Naive thymus-derived CD4-positive, alpha-beta T cell (primary cell): ENCODE measurements at regions of chrX and their contacts with region 1.

Region 1: DNA sequence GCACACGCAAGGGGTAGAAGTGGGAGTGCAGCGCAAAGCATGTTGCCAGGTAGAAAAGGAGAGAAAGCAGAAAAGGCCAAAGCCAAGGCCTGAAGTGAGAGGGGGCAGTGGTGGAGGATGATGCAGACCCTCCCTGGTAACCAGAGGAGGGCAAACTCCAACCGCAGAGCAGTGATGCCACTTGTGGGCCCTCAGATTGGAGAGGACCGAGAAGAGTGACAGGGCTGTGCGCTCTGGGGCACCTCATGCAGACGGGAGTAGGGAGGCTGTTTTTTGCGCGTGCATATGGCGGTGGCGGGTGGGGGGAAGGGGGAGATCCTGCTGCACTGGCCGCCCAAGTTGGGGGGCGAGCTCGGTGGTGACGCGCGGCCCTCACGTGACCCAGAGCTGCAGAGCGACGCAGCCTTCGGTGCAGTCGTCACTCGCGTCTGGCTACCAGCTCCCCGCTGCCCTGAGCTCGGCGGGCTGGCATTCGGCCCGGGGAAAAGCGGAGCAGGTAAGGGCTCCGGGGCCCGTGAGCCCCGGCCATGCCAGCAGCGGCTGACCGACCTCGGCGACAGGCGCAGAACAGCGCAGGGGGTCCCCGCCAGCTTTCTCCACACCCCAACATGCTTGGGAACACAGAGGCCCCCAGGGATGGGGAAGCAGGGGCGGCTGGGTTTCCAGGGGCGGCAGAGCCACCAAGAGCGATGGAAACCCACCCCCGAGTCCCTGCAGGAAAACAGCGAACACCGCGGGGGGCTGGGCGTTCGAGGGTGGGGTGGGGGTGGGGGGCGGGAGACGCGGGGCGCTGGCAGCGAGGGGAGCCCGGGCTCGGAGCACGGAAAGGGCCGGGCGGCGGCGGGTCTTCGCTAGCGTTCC is at the start of gene BEX3:
- DNase-seq: peak in 8 of 9 donors; percentile 21 to 61 (median 50)
- ATAC-seq: peak; percentile 73
- H3K4me3 ChIP-seq: peak within 1 kb of the TSS; percentile 27
- H3K4me3 Mint-ChIP-seq: peak within 1 kb of the TSS; percentile 74 to 91 (median 84)
- H3K27ac ChIP-seq: peak within 1 kb of the TSS; percentile 73
- H3K27ac Mint-ChIP-seq: peak within 1 kb of the TSS in 8 of 9 donors; percentile 64 to 89 (median 76)
- H3K4me1 ChIP-seq: no peaks in the 10 kb centered on the region
- H3K4me1 Mint-ChIP-seq: peaks cover 3 to 14% (median 7%) of the 10 kb centered on the region in 7 donors
- H3K27me3 ChIP-seq: no peaks in the 10 kb centered on the region
- H3K27me3 Mint-ChIP-seq: peaks cover 0 to 4% (median 0%) of the 10 kb centered on the region in 5 donors
- total RNA-seq, gene BEX3: 5.9 to 75.5 (median 28.0) TPM

Region 2: DNA sequence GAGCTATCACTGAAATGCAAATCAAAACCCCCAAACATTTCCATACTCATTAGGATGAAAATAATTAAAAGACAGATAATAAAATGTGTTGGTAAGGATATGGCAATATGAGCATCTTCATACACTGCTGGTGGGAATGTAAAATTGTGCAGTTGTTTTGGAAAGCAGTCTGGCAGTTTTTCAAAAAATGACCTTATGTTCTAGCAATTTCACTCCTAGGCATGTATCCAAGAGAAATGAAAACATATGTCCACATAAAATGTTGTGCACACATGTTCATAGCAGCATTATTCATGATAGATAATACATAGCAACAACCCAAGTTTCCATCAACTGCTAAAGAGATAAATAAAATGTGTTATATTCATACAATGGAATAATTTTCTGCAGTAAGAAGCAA is 678.9 kb before region 1 on chrX:
- CTCF ChIA-PET with region 1: no interaction called
- POLR2A ChIA-PET with region 1: no interaction called
- intact Hi-C with region 1: no loop called
- DNase-seq: no peak
- ATAC-seq: no peak
- H3K4me3 ChIP-seq: no peak overlapping the region
- H3K4me3 Mint-ChIP-seq: no peak overlapping the region
- H3K27ac ChIP-seq: no peak overlapping the region
- H3K27ac Mint-ChIP-seq: no peak overlapping the region
- H3K4me1 ChIP-seq: no peaks in the 10 kb centered on the region
- H3K4me1 Mint-ChIP-seq: no peaks in the 10 kb centered on the region
- H3K27me3 ChIP-seq: no peaks in the 10 kb centered on the region
- H3K27me3 Mint-ChIP-seq: no peaks in the 10 kb centered on the region

Region 3: GRCh38 chrX:103356130-103356798 is 20.1 kb before region 1 on chrX and contains the start of gene TCEAL9:
- CTCF ChIA-PET with region 1: no interaction called
- POLR2A ChIA-PET with region 1: interaction called, 3 read pairs
- intact Hi-C with region 1: loop called in 1 of 2 experiments (anchors 2 kb)
- DNase-seq: no peak
- ATAC-seq: no peak
- H3K4me3 ChIP-seq: peak within 1 kb of the TSS; percentile 62
- H3K4me3 Mint-ChIP-seq: peak within 1 kb of the TSS; percentile 79 to 91 (median 88)
- H3K27ac ChIP-seq: peak within 1 kb of the TSS; percentile 52
- H3K27ac Mint-ChIP-seq: peak within 1 kb of the TSS in 8 of 9 donors; percentile 12 to 90 (median 81)
- H3K4me1 ChIP-seq: no peaks in the 10 kb centered on the region
- H3K4me1 Mint-ChIP-seq: peaks cover 0 to 20% (median 11%) of the 10 kb centered on the region in 7 donors
- H3K27me3 ChIP-seq: no peaks in the 10 kb centered on the region
- H3K27me3 Mint-ChIP-seq: peaks cover 0 to 8% (median 0%) of the 10 kb centered on the region in 5 donors
- total RNA-seq, gene TCEAL9: 0.51 to 4.2 (median 1.1) TPM